ENCODE measurements at regions of chr2 and their contacts with region 1.

Region 1: GRCh38 chr2:201118121-201118960 is 2.4 kb downstream of the CFLAR start:
- DNase-seq: peak; percentile 92
- H3K4me3 Mint-ChIP-seq: peak overlapping the region; percentile 84
- H3K27ac Mint-ChIP-seq: peak overlapping the region; percentile 100
- H3K4me1 Mint-ChIP-seq: peaks cover 64% of the 10 kb centered on the region
- H3K27me3 Mint-ChIP-seq: peaks cover 7% of the 10 kb centered on the region

Region 2: DNA sequence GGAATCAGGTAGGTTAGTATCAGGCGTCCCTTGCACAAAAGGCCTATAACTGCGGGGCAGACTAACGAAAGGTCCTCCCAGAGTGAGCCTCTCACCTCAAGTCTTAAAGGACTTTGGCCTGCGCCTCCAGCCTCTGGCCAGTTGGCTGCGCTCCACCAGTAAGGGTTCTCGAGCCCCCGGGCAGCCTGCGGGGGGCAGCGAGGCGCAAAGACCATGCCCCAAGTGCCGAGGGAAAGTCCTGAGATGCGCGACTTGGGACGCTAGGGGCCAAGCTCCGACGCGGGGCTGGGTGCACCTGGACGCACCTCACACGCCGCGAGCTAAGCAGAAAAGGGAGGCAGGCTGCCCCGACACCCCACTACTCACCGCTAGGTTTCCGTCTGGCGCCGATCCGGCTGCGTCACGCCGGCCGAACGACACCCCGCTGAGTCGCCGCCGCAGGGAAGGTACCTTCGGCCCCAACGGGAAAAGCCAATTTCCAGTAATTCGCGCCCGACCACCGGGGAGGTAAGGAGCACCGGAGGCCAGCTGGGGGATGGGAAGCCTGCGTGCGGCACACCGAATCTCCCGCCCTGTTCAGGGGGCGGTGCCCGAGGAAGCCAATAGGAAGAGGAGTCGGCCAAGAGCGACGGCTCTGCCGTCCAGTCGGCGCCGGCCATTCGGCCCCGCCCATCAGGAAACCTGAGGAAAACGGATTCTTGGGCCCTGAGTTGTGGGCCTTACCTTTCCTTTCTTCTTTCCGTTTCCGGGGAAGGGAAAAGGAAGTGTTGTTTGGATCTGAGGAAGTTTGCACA is 155.0 kb before region 1 on chr2 and contains the start of gene ORC2:
- CTCF ChIA-PET with region 1: no interaction called
- DNase-seq: peak; percentile 94
- H3K4me3 Mint-ChIP-seq: peak within 1 kb of the TSS; percentile 91
- H3K27ac Mint-ChIP-seq: peak within 1 kb of the TSS; percentile 92
- H3K4me1 Mint-ChIP-seq: peaks cover 65% of the 10 kb centered on the region
- H3K27me3 Mint-ChIP-seq: no peaks in the 10 kb centered on the region

Region 3: DNA sequence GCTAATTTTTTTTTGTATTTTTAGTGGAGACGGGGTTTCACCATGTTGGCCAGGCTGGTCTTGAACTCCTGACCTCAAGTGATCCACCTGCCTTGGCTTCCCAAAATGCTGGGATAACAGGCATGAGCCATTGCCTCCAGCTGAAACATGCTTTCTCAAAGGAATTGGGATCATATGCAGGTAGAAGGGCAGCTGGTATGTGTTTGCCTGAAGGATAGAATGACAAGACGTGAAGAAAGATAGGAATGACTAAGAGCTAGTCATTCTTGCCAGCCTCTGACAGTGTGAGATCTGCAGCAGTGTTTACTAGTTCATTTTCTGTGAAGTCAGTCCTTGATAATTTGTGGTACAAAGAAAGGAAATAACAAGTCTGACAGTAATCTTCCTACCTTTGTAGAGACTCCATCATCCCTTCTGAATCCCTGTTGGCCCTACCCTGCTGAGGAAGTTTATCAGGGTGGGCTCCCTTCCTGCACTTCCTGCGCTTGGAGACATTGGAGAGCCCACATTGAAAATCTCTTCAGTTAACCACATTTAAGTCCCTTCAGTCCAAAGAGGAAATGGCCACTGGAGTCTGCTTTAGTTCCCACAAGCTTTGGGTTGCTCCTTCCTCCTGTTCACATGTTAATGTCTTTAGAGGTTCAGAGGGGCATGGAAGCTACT is 12.3 kb after region 1 on chr2:
- CTCF ChIA-PET with region 1: interaction called, 64 read pairs
- DNase-seq: peak; percentile 45
- H3K4me3 Mint-ChIP-seq: peak overlapping the region; percentile 63
- H3K27ac Mint-ChIP-seq: peak overlapping the region; percentile 97
- H3K4me1 Mint-ChIP-seq: peaks cover 77% of the 10 kb centered on the region
- H3K27me3 Mint-ChIP-seq: no peaks in the 10 kb centered on the region

Region 4: DNA sequence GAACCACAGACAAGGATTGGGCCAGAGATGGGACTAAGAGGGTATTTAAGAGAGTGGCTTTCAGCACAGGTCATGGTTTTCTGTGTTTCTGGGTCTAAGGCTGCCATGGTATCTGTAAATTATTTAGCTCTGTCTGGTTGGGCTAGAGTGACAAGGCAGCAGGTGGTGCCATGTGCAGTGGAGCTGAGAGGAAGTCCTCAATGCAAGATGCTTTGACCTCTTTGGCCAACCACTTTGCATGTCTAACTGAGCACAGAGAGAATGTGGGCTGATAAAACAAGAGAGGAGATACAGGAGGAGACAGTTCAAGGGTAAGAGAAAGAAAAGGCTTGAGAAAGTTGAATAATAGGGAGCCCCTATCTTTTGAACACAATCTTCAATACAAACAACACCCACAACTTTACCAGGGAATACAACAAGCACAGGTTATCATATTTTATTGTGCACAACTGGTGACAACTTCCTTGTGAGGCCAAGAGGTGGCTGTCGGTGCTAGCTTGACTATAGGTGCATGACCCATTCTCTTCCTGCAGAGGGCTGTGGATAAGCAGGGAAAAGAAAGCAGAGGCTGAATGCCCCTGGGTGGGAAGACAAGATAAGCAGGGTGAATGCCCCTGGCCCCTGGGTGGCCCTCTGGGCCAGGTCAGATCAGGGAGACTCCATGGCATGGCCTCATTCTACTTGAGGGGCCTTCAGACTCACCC is 226.5 kb after region 1 on chr2:
- CTCF ChIA-PET with region 1: no interaction called
- DNase-seq: no peak
- H3K4me3 Mint-ChIP-seq: no peak overlapping the region
- H3K27ac Mint-ChIP-seq: no peak overlapping the region
- H3K4me1 Mint-ChIP-seq: peaks cover 10% of the 10 kb centered on the region
- H3K27me3 Mint-ChIP-seq: no peaks in the 10 kb centered on the region